ENCODE measurements at regions of chr11 and their contacts with region 1.

Region 1: GRCh38 chr11:130861902-130862860 is 54.1 kb downstream of the SNX19 start:
- DNase-seq: peak; percentile 89
- H3K4me3 Mint-ChIP-seq: no peak overlapping the region
- H3K27ac Mint-ChIP-seq: no peak overlapping the region
- H3K4me1 Mint-ChIP-seq: no peaks in the 10 kb centered on the region
- H3K27me3 Mint-ChIP-seq: peaks cover under 1% of the 10 kb centered on the region

Region 2: GRCh38 chr11:130434521-130435223 is 427.5 kb before region 1 on chr11:
- CTCF ChIA-PET with region 1: interaction called, 226 read pairs
- POLR2A ChIA-PET with region 1: interaction called, 7 read pairs
- DNase-seq: peak; percentile 74
- H3K4me3 Mint-ChIP-seq: no peak overlapping the region
- H3K27ac Mint-ChIP-seq: no peak overlapping the region
- H3K4me1 Mint-ChIP-seq: peaks cover 25% of the 10 kb centered on the region
- H3K27me3 Mint-ChIP-seq: peaks cover 33% of the 10 kb centered on the region

Region 3: DNA sequence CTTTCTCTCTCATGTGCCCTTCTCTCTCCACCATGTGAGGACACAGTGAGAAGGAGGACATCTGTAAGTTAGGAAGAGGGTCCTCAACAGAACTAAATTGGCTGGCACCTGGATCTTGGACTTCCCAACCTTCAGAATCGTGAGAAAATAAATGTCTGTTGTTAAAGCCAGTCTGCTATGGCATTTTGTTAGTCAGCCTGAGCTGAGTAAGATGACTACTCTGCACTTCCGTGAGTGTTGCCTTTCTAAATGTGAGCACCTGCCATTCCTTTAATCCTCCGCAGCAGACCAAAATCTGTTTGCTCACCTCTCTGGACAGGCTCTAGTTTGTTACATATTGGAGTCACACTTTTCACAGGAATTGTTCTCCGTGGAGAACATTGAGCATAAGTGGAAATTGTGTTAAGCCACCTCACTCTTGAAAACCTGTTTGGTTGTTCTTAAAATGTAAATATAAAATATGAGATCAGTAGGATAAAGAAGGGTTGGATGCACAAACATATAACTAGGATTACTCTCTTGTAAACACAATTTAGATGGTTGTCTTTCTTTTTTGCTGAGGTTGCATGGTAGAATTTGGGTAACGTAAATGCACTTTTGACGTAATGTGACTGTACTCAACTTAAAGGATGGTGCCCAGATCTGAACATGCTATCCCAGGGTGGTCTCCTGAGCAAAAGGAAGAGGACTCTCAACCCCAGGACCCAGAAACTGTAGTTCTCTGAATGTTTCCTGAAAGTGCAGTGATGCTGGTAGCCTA is 11.8 kb before region 1 on chr11:
- CTCF ChIA-PET with region 1: interaction called, 26 read pairs
- POLR2A ChIA-PET with region 1: no interaction called
- DNase-seq: no peak
- H3K4me3 Mint-ChIP-seq: no peak overlapping the region
- H3K27ac Mint-ChIP-seq: no peak overlapping the region
- H3K4me1 Mint-ChIP-seq: peaks cover 2% of the 10 kb centered on the region
- H3K27me3 Mint-ChIP-seq: peaks cover 5% of the 10 kb centered on the region

Region 4: DNA sequence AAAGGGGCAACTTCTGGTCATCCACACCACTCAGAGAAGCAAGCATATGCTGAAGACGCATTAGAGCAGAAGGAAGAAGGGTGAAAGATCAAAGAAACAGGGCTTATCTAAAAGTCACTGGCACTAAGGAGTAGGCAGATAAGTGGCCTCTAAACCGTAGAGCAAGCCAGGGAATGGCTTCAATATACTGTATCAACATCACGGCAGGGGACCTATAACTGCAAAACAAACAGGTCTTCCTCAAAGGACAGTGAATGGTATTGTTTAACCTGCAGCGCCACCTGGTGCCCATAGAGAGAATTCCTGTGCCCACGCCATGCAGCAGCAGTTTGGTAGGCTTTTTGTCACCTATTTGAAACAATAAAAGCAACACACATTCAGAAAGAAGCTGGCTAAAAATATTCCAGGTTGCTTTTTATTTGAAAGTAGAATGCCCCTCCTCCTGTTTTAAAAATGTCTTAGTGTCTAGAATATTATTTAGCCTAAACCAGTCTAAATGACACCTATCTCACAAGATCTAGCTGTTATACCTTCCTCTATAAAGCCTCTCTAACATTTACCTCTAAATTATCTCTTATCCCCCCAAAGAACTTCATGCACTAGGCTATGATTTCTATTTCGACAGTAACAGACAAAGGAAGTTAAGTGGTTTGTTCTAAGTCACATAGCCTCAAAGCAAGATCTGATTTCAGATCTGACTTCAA is 32.3 kb after region 1 on chr11:
- CTCF ChIA-PET with region 1: interaction called, 21 read pairs
- POLR2A ChIA-PET with region 1: interaction called, 3 read pairs
- DNase-seq: peak; percentile 72
- H3K4me3 Mint-ChIP-seq: no peak overlapping the region
- H3K27ac Mint-ChIP-seq: no peak overlapping the region
- H3K4me1 Mint-ChIP-seq: no peaks in the 10 kb centered on the region
- H3K27me3 Mint-ChIP-seq: no peaks in the 10 kb centered on the region

Measured in activated CD4-positive, alpha-beta memory T cell treated with anti-CD3 and anti-CD28 coated beads, Interleukin-2, amount 10 ng/mL, durations not matched to agents 7 days and 5 days (primary cell).